Uterus (tissue), 4 donors: ENCODE measurements at regions of chr22 and their contacts with region 1.

Region 1: GRCh38 chr22:36470162-36470993 is 11.1 kb downstream of the TXN2 start:
- DNase-seq: peak; percentile 83 to 90
- H3K4me3 ChIP-seq: no peak overlapping the region
- H3K27ac ChIP-seq: peak overlapping the region; percentile 96 to 97
- H3K4me1 ChIP-seq: peaks cover 4 to 9% of the 10 kb centered on the region in 2 donors
- H3K27me3 ChIP-seq: no peaks in the 10 kb centered on the region
- CTCF ChIP-seq: peak; percentile 97
- POLR2A ChIP-seq: no peak

Region 2: DNA sequence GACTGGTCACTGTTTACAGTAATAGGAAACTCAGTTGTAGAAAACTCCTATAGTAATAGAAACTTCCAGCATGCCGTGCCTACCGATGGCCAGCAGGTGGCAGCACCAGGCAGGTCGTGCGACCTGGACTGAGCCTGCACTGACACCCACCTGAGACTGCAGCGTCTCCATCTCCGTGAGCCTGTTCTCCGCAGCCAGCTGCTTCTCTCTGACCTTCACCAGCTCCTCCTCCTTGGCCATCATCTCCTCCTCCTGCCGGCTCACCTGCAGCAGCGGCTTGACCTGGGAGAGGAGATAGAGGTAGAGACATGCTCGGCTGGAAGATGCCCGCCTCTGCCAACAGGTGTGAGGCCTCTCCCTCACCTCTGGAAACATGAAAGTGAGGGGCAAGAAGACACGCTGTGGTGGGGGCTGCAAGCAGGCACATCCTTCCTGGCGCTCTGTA is 169.0 kb before region 1 on chr22:
- intact Hi-C with region 1: loop called (anchors 2 kb)
- DNase-seq: peak; percentile 80 to 81
- H3K4me3 ChIP-seq: no peak overlapping the region
- H3K27ac ChIP-seq: peak overlapping the region; percentile 36 to 49
- H3K4me1 ChIP-seq: no peaks in the 10 kb centered on the region
- H3K27me3 ChIP-seq: no peaks in the 10 kb centered on the region
- CTCF ChIP-seq: peak; percentile 92 to 94 (median 92)
- POLR2A ChIP-seq: no peak

Region 3: GRCh38 chr22:36734171-36735058 is 264.0 kb after region 1 on chr22:
- intact Hi-C with region 1: no loop called
- DNase-seq: no peak
- H3K4me3 ChIP-seq: no peak overlapping the region
- H3K27ac ChIP-seq: no peak overlapping the region
- H3K4me1 ChIP-seq: no peaks in the 10 kb centered on the region
- H3K27me3 ChIP-seq: no peaks in the 10 kb centered on the region
- CTCF ChIP-seq: no peak
- POLR2A ChIP-seq: no peak